Naive thymus-derived CD8-positive, alpha-beta T cell (primary cell): ENCODE measurements at regions of chr3 and their contacts with region 1.

Region 1: DNA sequence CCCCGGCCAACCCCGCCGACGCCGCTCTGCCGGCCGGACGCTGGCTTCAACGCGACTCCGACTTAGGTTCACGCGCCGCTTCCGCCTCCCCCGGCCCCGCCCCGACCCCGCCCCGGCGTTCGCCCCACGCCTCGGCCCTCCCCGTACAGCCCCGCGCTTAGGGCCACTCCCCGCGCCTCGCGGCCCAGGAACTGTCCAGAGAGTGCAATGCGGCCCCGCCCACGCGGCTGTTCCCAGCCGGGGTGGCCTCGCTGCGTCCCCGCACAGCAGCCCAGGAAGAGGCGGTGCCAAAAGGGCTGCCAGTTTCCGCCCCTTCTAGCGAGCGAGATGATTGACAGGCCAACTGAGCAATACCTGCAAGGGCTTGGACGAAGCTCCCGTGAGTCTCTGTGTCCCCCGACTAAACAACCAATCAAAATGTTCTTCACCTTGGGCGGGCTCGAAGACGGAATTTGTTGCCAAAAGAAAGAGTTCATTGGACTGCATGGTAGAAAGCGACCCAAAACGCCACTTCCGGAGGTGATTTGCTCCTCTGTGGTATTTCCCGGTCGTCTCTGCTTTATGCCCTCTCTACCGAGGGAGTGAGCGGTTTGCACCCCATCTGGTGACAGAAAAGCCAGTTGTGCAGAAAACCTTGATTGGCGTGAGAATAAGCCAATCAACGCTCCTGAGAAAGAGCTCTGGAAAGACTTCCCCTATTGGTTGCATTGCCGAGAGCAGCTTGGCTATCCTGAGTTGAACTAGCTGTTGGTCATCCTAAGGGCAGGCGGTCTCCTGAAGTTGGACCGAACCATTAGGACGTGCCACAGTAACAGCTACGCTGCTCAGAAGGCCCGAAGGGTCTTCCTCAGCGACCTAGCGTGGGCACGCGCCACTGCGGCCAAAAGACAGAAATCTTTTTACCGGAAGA is at the start of gene UBP1:
- DNase-seq: peak; percentile 87 to 99 (median 96)
- ATAC-seq: peak; percentile 82 to 86
- H3K4me3 Mint-ChIP-seq: peak within 1 kb of the TSS; percentile 94 to 100 (median 99)
- H3K27ac Mint-ChIP-seq: peak within 1 kb of the TSS; percentile 100
- H3K4me1 Mint-ChIP-seq: peaks cover 28 to 52% (median 47%) of the 10 kb centered on the region in 4 donors
- H3K27me3 Mint-ChIP-seq: no peaks in the 10 kb centered on the region
- polyA plus RNA-seq, gene UBP1: 9.0 to 12.6 (median 12.3) TPM

Region 2: GRCh38 chr3:33798411-33799201 is 358.0 kb after region 1 on chr3 and contains the start of gene PDCD6IP:
- POLR2A ChIA-PET with region 1: interaction called, 22 read pairs
- DNase-seq: peak; percentile 77 to 95 (median 86)
- ATAC-seq: peak; percentile 80 to 83
- H3K4me3 Mint-ChIP-seq: peak within 1 kb of the TSS; percentile 91 to 100 (median 98)
- H3K27ac Mint-ChIP-seq: peak within 1 kb of the TSS; percentile 94 to 99 (median 98)
- H3K4me1 Mint-ChIP-seq: peaks cover 24 to 61% (median 51%) of the 10 kb centered on the region in 4 donors
- H3K27me3 Mint-ChIP-seq: no peaks in the 10 kb centered on the region
- polyA plus RNA-seq, gene PDCD6IP: 56.9 to 61.7 (median 59.0) TPM